Kidney (tissue), 22 donors: ENCODE measurements at regions of chrX and their contacts with region 1.

Region 1: GRCh38 chrX:24395775-24396174 is 35.3 kb downstream of the SUPT20HL1 start:
- DNase-seq: peak in 4 of 5 donors; percentile 40 to 85 (median 74)
- H3K4me3 ChIP-seq: no peak overlapping the region
- H3K27ac ChIP-seq: no peak overlapping the region
- H3K4me1 ChIP-seq: no peaks in the 10 kb centered on the region
- H3K27me3 ChIP-seq: peaks cover 17% of the 10 kb centered on the region
- CTCF ChIP-seq: peak; percentile 84

Region 2: DNA sequence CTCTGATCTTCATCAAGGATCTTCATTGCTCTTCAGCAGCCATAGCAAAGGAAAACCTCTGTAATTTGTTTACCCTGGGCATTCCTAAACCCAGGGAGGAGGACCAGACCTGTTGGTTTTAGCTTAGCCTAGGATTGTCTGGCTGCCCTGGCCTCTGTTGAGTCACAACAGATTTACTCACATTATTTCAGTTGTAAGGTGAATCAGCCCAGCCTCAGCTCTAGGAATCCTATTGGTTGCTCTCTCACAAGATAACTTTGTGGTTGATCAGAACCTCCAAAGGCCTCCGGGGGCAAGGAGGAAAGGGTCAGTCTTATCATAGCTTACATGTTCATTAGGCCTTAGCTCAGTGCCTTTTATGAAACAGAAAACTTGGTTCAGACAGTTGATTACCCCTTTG is 110.3 kb after region 1 on chrX:
- intact Hi-C with region 1: loop called (anchors 10 kb)
- DNase-seq: no peak
- H3K4me3 ChIP-seq: no peak overlapping the region
- H3K27ac ChIP-seq: no peak overlapping the region
- H3K4me1 ChIP-seq: no peaks in the 10 kb centered on the region
- H3K27me3 ChIP-seq: peaks cover 4% of the 10 kb centered on the region
- CTCF ChIP-seq: no peak